Activated naive CD4-positive, alpha-beta T cell treated with anti-CD3 and anti-CD28 coated beads for 36 hours (primary cell): ENCODE measurements at regions of chr3 and their contacts with region 1.

Region 1: GRCh38 chr3:46488735-46489361 is 8.9 kb upstream of the RTP3 start:
- DNase-seq: peak; percentile 98
- H3K4me3 Mint-ChIP-seq: peak overlapping the region; percentile 21
- H3K27ac Mint-ChIP-seq: no peak overlapping the region
- H3K4me1 Mint-ChIP-seq: peaks cover 15% of the 10 kb centered on the region
- H3K27me3 Mint-ChIP-seq: peaks cover 4% of the 10 kb centered on the region

Region 2: DNA sequence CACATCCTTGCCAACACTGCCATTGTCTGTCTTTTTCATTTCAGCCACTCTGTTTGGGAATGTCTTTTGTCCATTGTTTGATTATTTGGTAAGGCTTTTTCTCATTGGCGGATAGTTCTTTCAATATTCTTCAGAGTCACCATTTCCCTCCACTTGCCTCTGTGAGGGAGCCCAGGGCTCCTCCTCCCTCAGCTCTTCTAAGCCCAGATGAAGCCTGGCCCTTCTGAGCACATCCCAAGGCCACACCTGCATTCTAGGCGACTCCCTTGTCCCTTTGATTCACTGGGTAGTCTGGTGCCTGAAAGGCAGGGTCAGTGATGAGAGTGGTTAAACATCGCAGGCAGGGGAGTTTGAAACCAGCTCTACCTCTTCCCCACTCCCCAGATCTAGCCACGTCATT is 11.7 kb before region 1 on chr3:
- CTCF ChIA-PET with region 1: interaction called, 18 read pairs
- intact Hi-C with region 1: no loop called
- DNase-seq: no peak
- H3K4me3 Mint-ChIP-seq: no peak overlapping the region
- H3K27ac Mint-ChIP-seq: no peak overlapping the region
- H3K4me1 Mint-ChIP-seq: no peaks in the 10 kb centered on the region
- H3K27me3 Mint-ChIP-seq: peaks cover 5% of the 10 kb centered on the region

Region 3: DNA sequence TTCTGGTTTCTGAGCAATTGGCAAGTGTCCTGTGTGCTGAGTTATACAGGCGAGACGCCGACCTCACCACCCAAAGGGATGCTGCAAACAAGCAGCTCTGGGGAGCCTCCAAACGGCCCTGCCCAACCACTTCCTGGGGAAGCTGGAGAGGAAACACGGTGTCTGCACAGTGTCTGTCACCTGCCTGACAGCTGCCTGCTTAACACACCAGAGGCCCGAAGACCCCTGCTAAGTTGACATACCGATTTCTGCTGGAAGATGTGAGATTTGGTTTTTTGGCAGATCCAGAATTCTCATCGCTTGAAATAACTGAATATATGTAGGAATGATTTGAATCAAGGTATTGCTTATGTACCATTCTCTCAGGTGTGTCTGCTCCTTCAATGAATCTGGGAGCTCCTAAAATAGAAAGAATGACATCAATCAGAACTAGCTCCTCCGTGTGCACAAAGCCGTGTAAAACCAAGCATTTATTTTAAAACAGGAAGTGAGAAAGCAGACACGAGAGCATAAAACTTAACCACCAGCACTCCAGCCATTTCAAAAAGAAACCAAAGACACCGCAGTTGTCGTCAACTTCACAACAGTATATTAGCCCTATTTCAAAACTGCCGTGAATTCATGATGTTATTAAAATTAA is 50.1 kb after region 1 on chr3:
- CTCF ChIA-PET with region 1: interaction called, 23 read pairs
- intact Hi-C with region 1: no loop called
- DNase-seq: peak; percentile 90
- H3K4me3 Mint-ChIP-seq: peak overlapping the region; percentile 54
- H3K27ac Mint-ChIP-seq: peak overlapping the region; percentile 78
- H3K4me1 Mint-ChIP-seq: peaks cover 58% of the 10 kb centered on the region
- H3K27me3 Mint-ChIP-seq: no peaks in the 10 kb centered on the region

Region 4: DNA sequence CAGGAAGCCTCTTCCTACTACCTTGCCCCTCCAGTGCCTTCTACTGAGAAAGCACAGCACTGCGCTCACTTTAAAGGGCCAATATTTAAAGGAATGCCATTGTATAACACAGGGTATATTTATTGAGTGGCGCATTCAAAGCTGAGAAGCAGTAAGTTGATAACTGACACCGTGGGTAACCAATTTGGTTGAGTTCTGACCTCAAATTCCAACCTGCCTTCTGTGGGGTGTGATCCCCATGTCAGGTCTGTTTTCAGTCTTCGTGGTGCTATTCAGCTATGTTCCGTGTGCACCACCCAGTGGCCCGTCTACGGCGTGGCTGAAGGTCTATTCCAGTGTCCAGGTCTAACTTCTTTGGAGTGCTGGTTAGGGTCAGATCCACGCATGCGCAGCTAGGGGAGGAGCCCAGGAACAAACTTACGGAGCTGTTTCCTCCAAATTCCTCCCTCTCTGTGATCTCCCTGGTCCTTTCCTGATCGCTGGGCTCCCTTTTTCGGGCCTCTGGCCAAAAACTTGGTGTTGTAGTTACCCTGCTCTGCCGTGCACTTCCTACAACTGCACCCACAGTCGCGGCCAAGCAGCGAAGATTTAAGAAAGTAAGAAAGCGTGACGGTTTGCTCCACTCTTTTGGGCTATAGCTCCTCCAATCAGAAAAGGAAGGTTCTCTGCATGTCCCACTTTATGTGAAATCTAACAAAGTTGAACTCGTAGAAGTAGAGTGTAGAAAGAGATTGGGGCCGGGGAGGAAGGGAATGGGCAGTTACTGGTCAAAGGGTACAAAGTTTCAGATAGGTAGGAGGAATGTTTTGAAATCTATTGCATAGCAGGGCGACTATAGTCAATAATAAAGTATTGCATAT is 69.6 kb after region 1 on chr3:
- CTCF ChIA-PET with region 1: interaction called, 103 read pairs
- intact Hi-C with region 1: loop called (anchors 1 kb)
- DNase-seq: peak; percentile 82
- H3K4me3 Mint-ChIP-seq: peak overlapping the region; percentile 69
- H3K27ac Mint-ChIP-seq: no peak overlapping the region
- H3K4me1 Mint-ChIP-seq: peaks cover 10% of the 10 kb centered on the region
- H3K27me3 Mint-ChIP-seq: peaks cover 3% of the 10 kb centered on the region

Region 5: GRCh38 chr3:46619845-46620778 is 131.3 kb after region 1 on chr3:
- CTCF ChIA-PET with region 1: interaction called, 181 read pairs
- intact Hi-C with region 1: no loop called
- DNase-seq: no peak
- H3K4me3 Mint-ChIP-seq: no peak overlapping the region
- H3K27ac Mint-ChIP-seq: no peak overlapping the region
- H3K4me1 Mint-ChIP-seq: no peaks in the 10 kb centered on the region
- H3K27me3 Mint-ChIP-seq: peaks cover 5% of the 10 kb centered on the region

Region 6: DNA sequence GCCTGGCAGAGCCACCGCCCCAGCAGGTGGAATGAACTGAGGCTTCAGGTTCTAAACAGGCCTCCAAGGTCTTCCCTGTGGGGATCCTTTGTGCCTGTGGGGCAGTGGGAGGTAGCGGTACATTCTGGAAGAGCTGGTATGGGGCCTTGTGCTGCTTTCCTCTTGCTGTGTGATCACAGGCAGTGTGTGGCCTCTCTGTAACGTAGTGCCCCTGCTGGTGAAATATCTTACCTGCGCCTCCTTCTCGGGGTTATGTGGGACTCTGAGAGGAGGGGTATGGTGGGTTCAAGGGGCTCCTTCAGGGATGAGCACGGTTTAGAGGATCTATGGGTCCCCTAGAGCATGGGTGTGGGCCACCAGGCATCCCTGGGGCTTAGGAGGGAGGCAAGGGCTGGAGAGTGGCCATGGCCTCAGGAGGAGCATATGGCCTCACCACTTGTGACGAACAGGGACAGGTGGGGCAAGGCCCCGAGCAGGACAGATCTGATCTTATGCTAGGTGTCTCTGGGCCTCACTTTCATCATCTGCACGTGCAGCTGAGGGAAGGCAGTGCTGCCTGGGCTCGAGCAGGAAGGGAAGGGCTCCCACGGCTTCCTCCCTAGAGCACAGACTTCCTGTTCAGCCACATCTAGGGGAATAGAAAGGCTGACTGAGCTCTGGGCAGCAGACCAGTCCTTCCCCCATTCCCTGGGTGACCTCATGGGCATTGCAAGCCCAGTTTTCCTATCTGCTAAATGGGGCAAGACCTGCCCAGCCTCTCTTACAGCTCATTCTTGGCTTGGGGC is 206.5 kb after region 1 on chr3:
- CTCF ChIA-PET with region 1: interaction called, 5 read pairs
- intact Hi-C with region 1: loop called (anchors 10 kb)
- DNase-seq: peak; percentile 73
- H3K4me3 Mint-ChIP-seq: peak overlapping the region; percentile 84
- H3K27ac Mint-ChIP-seq: peak overlapping the region; percentile 89
- H3K4me1 Mint-ChIP-seq: peaks cover 58% of the 10 kb centered on the region
- H3K27me3 Mint-ChIP-seq: no peaks in the 10 kb centered on the region

Region 7: GRCh38 chr3:47496892-47497291 is 1008.0 kb after region 1 on chr3:
- CTCF ChIA-PET with region 1: no interaction called
- intact Hi-C with region 1: no loop called
- DNase-seq: no peak
- H3K4me3 Mint-ChIP-seq: no peak overlapping the region
- H3K27ac Mint-ChIP-seq: no peak overlapping the region
- H3K4me1 Mint-ChIP-seq: no peaks in the 10 kb centered on the region
- H3K27me3 Mint-ChIP-seq: no peaks in the 10 kb centered on the region